Mammary epithelial cell (primary cell): ENCODE measurements at regions of chr6 and their contacts with region 1.

Region 1: DNA sequence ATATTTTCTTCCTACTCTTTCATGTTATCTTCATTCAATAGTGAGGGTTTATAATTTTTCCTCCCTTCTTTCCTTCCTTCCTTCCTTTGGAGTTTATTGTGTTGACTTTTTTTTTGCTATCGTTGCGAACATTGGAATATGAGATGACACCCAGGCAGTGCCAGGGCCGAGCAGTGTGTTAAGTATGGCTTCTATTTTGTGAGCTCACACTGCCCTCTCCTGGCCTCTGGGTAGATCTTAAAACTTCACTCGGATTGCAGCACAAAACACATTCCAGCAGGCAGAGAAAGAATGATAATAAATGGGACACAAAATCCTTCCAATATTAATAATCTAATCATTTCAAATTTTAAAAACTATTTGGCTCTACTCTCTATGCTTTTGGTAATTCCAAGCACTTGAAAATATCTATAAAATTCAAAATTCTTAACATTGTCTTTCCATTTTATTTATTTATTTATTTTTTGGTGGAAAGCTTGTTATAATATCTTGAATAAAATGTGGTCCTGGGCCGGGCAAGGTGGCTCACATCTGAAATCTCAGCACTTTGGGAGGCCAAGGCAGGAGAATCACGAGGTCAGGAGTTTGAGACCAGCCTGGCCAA is 147.4 kb upstream of the OLIG3 start:
- DNase-seq: peak; percentile 57
- H3K4me3 ChIP-seq: no peak overlapping the region
- H3K27ac ChIP-seq: no peak overlapping the region
- H3K4me1 ChIP-seq: peaks cover 10% of the 10 kb centered on the region
- H3K27me3 ChIP-seq: no peaks in the 10 kb centered on the region
- CTCF ChIP-seq: peak; percentile 68 to 69

Region 2: DNA sequence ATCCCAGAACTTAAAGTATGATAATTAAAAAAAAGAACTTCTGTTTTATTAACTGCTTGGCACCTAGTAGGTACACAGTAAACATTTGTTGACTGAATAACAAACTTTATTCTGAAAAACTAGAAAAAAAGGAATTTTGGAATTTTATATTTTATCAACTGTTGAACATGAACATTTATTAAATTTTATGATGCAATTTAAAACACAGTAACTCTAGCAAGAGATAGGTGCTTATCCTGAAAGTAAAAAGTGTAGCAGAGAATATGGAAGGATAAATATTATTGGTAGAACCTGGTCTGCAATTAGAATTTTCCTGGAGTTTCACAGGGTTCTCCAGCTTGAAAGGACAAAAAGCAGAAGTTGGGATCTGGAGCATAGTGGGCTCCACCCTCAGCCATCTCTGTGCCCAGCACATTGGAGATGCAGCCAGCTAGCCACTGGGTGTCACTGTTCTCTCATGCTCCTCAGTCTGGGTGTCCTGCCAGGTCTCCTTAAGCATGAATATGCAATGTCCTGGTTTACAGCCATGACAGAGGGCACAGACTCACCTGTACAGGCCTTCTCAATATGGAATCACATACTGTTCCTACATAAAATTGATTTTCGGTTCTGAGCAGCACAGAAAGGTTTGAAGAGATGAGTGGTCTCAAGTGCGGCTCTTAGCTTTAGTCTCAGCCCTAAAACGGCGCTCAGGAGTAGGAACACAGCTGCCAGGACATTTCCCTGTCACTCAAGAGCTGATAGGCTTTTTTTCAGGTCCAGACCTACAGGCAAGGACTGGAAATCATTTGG is 565.1 kb before region 1 on chr6:
- CTCF ChIA-PET with region 1: interaction called, 3 read pairs
- dilution Hi-C with region 1: no loop called
- in situ Hi-C with region 1: no loop called
- intact Hi-C with region 1: loop called (anchors 1 kb)
- DNase-seq: peak; percentile 59
- H3K4me3 ChIP-seq: no peak overlapping the region
- H3K27ac ChIP-seq: no peak overlapping the region
- H3K4me1 ChIP-seq: no peaks in the 10 kb centered on the region
- H3K27me3 ChIP-seq: no peaks in the 10 kb centered on the region
- CTCF ChIP-seq: peak; percentile 92 to 94

Region 3: DNA sequence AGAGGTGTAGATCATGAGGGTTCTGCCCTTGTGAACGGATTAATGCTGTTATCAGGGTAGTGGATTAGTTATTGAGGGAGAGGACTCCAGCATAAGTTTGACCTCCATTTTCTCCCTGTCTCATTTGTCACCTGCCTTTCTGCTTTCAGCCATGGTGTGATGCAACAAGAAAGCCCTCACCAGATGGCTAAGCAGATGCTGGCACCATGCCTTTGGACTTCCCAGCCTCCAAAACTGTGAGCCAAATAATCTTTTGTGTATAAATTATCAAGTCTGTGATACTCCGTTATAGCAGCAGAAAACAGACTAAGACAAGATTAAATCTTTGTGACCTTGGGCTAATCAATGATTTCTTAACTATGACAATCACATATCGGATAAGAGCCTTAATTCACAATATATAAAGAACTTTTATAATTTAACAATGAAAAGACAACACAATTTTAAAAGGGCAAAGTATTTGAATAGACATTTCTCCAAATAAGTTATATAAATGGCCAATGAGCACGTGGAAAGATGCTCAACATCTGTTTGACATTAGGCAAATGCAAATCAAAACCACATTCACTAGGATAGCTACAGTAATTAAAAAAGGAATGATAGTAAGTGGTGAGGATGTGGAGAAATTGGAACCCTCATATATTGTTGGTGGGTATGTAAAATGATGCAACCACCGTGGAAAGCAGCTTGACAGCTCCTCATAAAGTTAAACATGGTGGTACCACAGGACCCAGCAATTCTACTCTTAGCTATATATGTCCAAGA is 377.1 kb before region 1 on chr6:
- CTCF ChIA-PET with region 1: no interaction called
- dilution Hi-C with region 1: no loop called
- in situ Hi-C with region 1: loop called (anchors 5 to 25 kb)
- intact Hi-C with region 1: no loop called
- DNase-seq: no peak
- H3K4me3 ChIP-seq: no peak overlapping the region
- H3K27ac ChIP-seq: no peak overlapping the region
- H3K4me1 ChIP-seq: peaks cover 10% of the 10 kb centered on the region
- H3K27me3 ChIP-seq: peaks cover 4% of the 10 kb centered on the region
- CTCF ChIP-seq: no peak

Region 4: DNA sequence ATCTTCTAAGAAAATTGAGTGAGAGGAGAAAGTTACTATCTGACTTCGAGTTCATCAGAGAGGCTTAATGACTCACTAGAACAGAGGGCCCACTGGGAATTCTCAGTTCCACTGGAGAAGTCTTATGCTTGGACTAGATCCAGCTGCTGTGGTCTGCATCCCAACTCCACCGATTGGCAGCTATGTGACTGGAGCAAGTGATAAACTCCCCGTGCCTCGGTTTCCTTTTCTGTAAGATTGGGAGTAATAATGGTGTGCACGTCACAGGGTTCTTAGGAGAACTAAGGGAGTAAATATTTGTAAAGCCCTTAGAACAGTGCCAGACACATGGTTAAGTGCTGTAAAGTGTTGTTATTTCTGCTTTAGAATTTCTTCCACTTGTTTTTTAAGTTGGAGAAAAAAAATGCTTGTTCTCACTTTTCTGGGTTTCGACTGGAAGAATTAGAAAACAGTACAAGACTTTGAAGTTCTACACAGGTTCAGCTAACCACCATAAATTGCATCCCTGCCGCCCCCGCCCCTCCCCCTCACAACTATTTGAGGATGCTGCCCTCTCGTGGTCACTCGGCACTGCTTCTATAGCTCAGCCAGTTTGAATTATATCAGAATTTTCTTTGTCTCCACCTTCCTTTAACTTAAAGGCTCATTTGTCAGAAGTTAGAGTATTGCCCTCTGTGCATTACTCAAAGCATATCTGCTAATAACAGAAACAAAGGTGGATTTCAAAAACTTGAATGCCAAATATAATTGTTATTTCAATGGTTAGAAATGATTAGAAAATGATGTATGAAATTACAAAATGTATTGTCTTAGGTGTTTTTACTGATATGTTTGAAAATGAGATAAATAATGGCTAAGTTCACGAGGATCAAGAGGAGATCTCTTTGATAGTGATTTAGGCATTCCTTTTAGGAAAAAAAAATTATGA is 327.4 kb before region 1 on chr6:
- CTCF ChIA-PET with region 1: no interaction called
- dilution Hi-C with region 1: no loop called
- in situ Hi-C with region 1: no loop called
- intact Hi-C with region 1: loop called (anchors 2 kb)
- DNase-seq: peak; percentile 30
- H3K4me3 ChIP-seq: no peak overlapping the region
- H3K27ac ChIP-seq: no peak overlapping the region
- H3K4me1 ChIP-seq: peaks cover 5% of the 10 kb centered on the region
- H3K27me3 ChIP-seq: no peaks in the 10 kb centered on the region
- CTCF ChIP-seq: peak; percentile 83

Region 5: GRCh38 chr6:138662471-138662870 is 1020.9 kb after region 1 on chr6:
- CTCF ChIA-PET with region 1: no interaction called
- dilution Hi-C with region 1: no loop called
- in situ Hi-C with region 1: no loop called
- intact Hi-C with region 1: no loop called
- DNase-seq: peak; percentile 87
- H3K4me3 ChIP-seq: no peak overlapping the region
- H3K27ac ChIP-seq: no peak overlapping the region
- H3K4me1 ChIP-seq: peaks cover 2% of the 10 kb centered on the region
- H3K27me3 ChIP-seq: no peaks in the 10 kb centered on the region
- CTCF ChIP-seq: no peak